A673 (cell line): ENCODE measurements at regions of chr11 and their contacts with region 1.

Region 1: DNA sequence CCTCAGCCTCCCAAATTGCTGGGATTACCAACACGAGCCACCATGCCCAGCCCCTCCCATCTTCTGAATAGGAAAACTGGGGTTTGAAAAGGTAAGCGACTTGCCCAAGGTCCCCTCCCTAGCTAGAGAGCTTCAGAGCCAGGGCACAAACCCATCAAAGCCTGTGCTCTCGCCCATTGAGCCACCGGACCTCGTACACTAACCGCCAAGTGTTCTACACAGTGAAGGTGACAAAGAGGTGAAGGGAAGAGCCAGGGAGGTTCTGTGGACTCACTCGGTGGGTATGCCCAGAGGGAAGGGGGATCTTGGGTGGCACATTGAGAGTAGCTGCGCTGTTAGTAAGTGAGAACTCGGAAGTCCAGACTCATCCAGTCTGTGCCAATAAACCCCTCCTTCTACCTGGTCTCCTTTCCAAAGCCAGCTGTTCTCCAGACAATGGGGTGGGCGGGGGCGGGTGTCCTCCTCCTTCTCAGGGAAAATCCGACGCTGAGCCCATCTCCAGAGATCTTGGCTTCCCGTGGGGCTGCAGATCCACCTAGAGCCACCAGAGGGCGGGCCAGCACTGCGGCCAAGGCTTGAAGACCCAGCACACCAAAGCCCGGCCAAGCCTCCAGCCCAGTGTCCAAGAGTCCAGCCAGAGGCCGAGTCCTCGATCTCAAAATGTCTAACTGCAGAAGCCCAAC is 3.2 kb upstream of the RTN4RL2 start:
- DNase-seq: peak; percentile 86
- H3K4me3 ChIP-seq: no peak overlapping the region
- H3K27ac ChIP-seq: no peak overlapping the region
- H3K4me1 ChIP-seq: peaks cover 27% of the 10 kb centered on the region
- H3K27me3 ChIP-seq: peaks cover 30% of the 10 kb centered on the region
- CTCF ChIP-seq: peak; percentile 99

Region 2: DNA sequence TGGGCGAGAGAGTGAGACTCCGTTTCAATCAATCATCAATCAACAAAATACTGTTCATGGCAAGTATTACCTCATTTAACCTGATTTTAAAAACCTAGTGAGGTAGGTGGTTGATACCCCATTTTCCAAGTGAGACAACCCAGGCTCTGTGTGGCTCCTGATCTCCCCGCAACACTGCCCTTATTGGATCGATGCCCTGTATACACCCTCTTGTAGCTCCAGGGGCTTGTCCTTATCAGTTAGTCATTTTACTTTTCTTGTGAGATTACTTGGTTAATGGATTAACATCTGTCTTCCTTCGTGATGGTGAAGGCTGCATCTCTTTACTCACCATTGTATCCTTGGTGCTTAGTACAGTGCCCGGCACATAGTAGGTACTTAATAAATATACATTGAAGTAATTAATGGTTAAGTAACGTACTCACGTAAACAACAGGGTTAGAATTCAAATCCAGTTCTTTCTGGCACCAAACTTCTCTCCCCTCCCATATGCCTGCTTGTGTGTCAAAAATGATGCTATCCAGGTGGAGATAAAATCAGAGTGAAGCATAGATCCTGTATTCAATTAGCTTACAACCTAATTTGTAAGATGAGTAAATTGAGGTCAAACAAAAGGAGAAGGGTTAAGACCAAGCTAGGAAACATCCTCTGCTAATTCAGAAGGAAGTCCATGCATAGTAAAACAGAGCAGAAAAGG is 64.9 kb before region 1 on chr11:
- CTCF ChIA-PET with region 1: interaction called, 10 read pairs
- POLR2A ChIA-PET with region 1: no interaction called
- intact Hi-C with region 1: no loop called
- DNase-seq: no peak
- H3K4me3 ChIP-seq: no peak overlapping the region
- H3K27ac ChIP-seq: no peak overlapping the region
- H3K4me1 ChIP-seq: no peaks in the 10 kb centered on the region
- H3K27me3 ChIP-seq: peaks cover 19% of the 10 kb centered on the region
- CTCF ChIP-seq: no peak

Region 3: GRCh38 chr11:57480409-57481137 is 23.5 kb after region 1 on chr11:
- CTCF ChIA-PET with region 1: interaction called, 13 read pairs
- POLR2A ChIA-PET with region 1: no interaction called
- intact Hi-C with region 1: loop called (anchors 1 kb)
- DNase-seq: peak; percentile 87
- H3K4me3 ChIP-seq: no peak overlapping the region
- H3K27ac ChIP-seq: no peak overlapping the region
- H3K4me1 ChIP-seq: peaks cover 16% of the 10 kb centered on the region
- H3K27me3 ChIP-seq: peaks cover 4% of the 10 kb centered on the region
- CTCF ChIP-seq: peak; percentile 96

Region 4: DNA sequence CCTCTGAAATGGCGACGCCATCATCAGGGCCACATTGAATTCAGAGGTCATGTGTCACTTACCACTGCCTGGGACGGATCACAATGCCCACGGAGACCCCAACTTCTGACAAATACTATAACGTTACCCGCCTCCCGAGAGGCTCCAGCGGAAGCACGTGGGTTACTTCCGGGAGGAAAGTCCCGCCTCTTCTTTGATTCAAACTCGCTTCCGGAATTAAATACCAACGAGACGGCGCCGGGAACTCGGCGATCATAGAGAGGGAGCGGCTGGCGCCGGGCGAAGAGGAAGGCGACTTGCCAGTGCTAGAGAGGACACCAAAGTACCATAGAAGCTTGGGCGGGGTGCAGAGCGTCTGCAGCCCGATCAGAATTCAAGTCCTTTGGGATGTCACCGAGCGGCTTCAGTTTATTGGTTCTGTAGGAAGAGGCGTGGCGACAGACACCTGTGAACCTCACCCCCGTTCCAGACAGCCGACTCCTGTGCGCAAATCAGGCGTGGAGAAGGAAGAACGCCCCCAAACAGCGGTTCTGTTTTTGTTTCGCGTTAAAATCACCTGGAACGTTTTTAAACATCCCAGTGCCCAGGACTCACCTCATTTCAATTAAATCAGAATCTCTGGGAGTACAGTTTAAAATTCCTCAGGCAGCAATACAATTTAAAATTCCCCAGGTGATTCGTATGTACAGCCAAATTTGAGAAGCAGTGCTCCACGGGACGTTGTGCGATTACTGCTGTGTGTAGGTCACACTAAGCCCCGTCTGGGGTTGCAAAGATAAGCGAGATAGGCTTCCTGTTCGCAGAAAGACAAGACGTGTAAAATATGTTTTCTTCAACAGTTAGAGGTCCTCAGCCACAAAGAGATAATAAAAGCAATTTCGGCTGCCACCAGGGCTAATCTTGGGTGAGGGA is 73.8 kb after region 1 on chr11 and contains the start of gene TIMM10:
- CTCF ChIA-PET with region 1: interaction called, 17 read pairs
- POLR2A ChIA-PET with region 1: no interaction called
- intact Hi-C with region 1: loop called (anchors 1 kb)
- DNase-seq: peak; percentile 100
- H3K4me3 ChIP-seq: peak within 1 kb of the TSS; percentile 95
- H3K27ac ChIP-seq: peak within 1 kb of the TSS; percentile 83
- H3K4me1 ChIP-seq: peaks cover 12% of the 10 kb centered on the region
- H3K27me3 ChIP-seq: no peaks in the 10 kb centered on the region
- CTCF ChIP-seq: no peak
- total RNA-seq, gene TIMM10: 165 and 176 TPM in 2 replicates

Region 5: DNA sequence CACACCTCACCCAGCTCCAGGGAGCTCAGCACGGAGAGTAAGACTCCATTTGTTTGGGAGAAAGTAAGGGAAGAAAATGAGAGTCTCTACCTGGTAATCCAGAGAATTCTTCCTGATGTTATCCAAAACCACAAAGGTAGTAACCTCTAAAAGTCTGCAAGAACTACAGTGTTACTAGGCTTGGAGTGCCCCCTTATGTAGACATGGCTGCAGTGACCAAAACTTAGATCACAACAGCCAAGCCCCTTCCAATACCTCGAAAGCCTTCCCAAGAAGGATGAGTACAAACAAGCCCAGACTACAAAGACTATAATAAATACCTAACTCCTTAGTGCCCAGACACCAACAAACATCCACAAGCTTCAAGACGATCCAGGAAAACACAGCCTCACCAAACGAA is 105.5 kb after region 1 on chr11:
- CTCF ChIA-PET with region 1: no interaction called
- POLR2A ChIA-PET with region 1: no interaction called
- intact Hi-C with region 1: no loop called
- DNase-seq: no peak
- H3K4me3 ChIP-seq: no peak overlapping the region
- H3K27ac ChIP-seq: no peak overlapping the region
- H3K4me1 ChIP-seq: no peaks in the 10 kb centered on the region
- H3K27me3 ChIP-seq: no peaks in the 10 kb centered on the region
- CTCF ChIP-seq: 0 out of 2 replicates have a peak, but pooled peaks have one; percentile 9

Region 6: GRCh38 chr11:57619331-57619730 is 162.2 kb after region 1 on chr11:
- CTCF ChIA-PET with region 1: no interaction called
- POLR2A ChIA-PET with region 1: no interaction called
- intact Hi-C with region 1: no loop called
- DNase-seq: no peak
- H3K4me3 ChIP-seq: no peak overlapping the region
- H3K27ac ChIP-seq: no peak overlapping the region
- H3K4me1 ChIP-seq: peaks cover 5% of the 10 kb centered on the region
- H3K27me3 ChIP-seq: no peaks in the 10 kb centered on the region
- CTCF ChIP-seq: peak; percentile 40; the same call in 1 of the 2 replicates

Region 7: DNA sequence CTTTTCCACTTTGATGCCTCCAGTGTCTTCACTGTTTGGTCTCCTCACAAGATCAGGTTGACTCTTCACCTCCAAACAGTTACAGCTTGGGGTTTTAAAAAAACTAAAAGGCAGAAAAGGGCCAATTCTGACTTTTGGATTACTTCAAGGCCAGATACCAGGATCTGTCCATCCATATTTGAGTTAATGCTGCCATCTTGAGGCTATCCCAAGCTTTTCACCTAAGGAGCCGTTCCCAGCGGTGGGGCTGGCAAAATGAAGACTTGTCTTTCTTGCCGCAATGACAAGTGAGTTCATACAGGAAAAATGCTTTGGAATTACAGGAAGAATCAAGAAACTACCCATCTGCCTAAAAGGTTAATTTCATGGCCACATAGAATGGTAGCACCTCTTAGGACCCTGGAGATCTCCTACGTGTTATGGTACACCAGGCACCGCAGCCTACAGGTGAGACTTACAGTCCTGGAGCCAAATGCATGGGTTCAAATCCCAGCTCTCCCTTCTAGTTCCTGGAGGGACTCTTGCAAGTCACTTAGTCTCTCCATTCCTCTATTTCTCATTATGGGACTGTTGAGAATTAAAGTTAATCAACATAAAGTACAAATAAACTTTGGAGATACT is 1056.8 kb after region 1 on chr11:
- CTCF ChIA-PET with region 1: interaction called, 3 read pairs
- POLR2A ChIA-PET with region 1: no interaction called
- intact Hi-C with region 1: loop called (anchors 1 kb)
- DNase-seq: peak; percentile 78
- H3K4me3 ChIP-seq: no peak overlapping the region
- H3K27ac ChIP-seq: no peak overlapping the region
- H3K4me1 ChIP-seq: no peaks in the 10 kb centered on the region
- H3K27me3 ChIP-seq: peaks cover 6% of the 10 kb centered on the region
- CTCF ChIP-seq: peak; percentile 80